ENCODE measurements at regions of chr11 and their contacts with region 1.

Region 1: GRCh38 chr11:86608251-86608799 is 64.1 kb downstream of the ME3 start:
- DNase-seq: peak; percentile 80
- ATAC-seq: peak; percentile 93

Region 2: GRCh38 chr11:86818466-86819192 is 210.3 kb after region 1 on chr11:
- intact Hi-C with region 1: loop called (anchors 10 kb)
- DNase-seq: no peak
- ATAC-seq: peak; percentile 74

Measured in sciatic nerve (tissue), 2 donors.